WTC11 (cell line): ENCODE measurements at regions of chr3 and their contacts with region 1.

Region 1: GRCh38 chr3:4720279-4721075 is 227.3 kb downstream of the ITPR1 start:
- DNase-seq: peak; percentile 28
- ATAC-seq: peak; percentile 76
- H3K4me3 Mint-ChIP-seq: peak overlapping the region; percentile 27
- H3K27ac Mint-ChIP-seq: peak overlapping the region; percentile 83
- H3K4me1 Mint-ChIP-seq: peaks cover 39% of the 10 kb centered on the region
- H3K27me3 Mint-ChIP-seq: no peaks in the 10 kb centered on the region
- CTCF ChIP-seq: 0 out of 2 replicates have a peak, but pooled peaks have one; percentile 17

Region 2: GRCh38 chr3:4730719-4731118 is 10.2 kb after region 1 on chr3:
- CTCF ChIA-PET with region 1: interaction called, 12 read pairs
- POLR2A ChIA-PET with region 1: interaction called, 10 read pairs
- DNase-seq: no peak
- ATAC-seq: no peak; the same call in 1 of the 2 replicates
- H3K4me3 Mint-ChIP-seq: no peak overlapping the region
- H3K27ac Mint-ChIP-seq: no peak overlapping the region
- H3K4me1 Mint-ChIP-seq: peaks cover 44% of the 10 kb centered on the region
- H3K27me3 Mint-ChIP-seq: no peaks in the 10 kb centered on the region
- CTCF ChIP-seq: no peak